Heart right ventricle (tissue), 16 donors: ENCODE measurements at regions of chr20 and their contacts with region 1.

Region 1: DNA sequence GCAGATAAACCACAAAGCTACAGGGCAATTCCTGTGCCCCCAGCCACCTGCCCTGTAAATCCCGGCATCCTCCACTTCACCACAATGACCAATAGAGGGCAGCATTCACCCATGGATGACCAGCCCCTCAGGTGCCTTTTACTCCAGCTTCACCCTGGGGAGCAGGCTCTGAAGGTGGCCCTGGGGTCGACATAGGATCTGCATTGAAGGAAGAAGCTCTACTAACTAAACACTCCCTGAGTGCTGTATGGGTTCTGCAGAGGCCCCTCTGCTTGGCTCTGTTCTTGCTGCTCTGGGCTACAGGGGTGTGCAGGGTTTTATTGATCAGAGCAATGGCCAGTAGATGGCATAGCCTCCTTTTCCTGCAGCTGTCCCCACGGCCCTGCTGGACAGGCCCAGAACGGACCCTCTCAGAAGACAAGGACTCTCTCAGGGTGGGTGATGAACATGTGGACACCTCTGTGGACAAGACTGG is 20.3 kb downstream of the CST4 start:
- DNase-seq: peak in 1 of 2 donors; percentile 54
- ATAC-seq: peak; percentile 67 to 86 (median 76)
- H3K4me3 ChIP-seq: no peak overlapping the region
- H3K27ac ChIP-seq: no peak overlapping the region
- H3K4me1 ChIP-seq: peaks cover 0 to 15% (median 0%) of the 10 kb centered on the region in 9 donors
- H3K27me3 ChIP-seq: peaks cover 0 to 5% (median 0%) of the 10 kb centered on the region in 7 donors
- CTCF ChIP-seq: peak; percentile 81 to 89 (median 87)

Region 2: DNA sequence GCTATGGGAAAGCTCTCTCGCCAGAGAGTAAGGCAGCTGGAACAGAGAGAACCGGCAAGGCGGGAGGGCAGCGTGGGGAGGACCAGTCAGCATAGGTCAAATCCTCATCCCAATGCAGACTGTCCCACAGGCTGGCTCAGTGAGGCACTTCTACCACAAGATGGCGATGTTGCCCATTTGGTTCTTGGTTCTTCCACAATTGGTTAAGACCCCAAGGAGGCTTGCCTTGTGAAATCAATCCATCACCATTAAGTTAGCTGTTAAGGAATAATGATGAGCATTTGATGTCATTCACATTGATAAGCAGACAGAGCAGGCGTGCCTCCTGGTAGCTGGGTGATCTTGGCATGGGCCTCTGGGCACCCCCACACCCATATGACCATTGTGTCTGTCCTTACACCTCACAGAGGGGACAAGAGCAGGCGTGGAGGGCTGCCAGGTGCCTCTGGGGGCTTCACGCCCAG is 226.6 kb before region 1 on chr20:
- intact Hi-C with region 1: loop called in 1 of 10 experiments (anchors 5 kb)
- DNase-seq: peak; percentile 31 to 72
- ATAC-seq: peak; percentile 59 to 82 (median 75)
- H3K4me3 ChIP-seq: no peak overlapping the region
- H3K27ac ChIP-seq: no peak overlapping the region
- H3K4me1 ChIP-seq: peaks cover 0 to 3% (median 0%) of the 10 kb centered on the region in 9 donors
- H3K27me3 ChIP-seq: no peaks in the 10 kb centered on the region
- CTCF ChIP-seq: peak; percentile 70 to 92 (median 86)

Region 3: DNA sequence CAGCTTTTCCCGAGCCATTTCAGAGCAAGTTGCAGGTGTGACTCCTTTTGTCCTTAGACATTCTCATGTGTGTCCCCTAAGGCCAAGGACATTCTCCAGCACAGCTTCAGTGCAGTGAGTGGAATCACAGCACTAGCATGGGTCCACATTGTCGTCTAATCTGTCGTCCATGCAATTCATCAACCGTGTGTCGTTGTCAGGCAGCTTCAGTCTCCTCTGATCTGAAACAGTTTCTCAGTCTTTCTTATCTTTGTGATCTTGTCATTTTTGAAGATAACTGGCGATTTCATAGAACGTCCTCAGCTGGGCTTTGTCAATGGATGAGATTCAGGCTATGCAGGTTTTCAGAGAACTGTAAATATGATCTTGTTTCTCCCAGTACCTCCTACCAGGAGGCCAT is 126.3 kb after region 1 on chr20:
- intact Hi-C with region 1: loop called in 1 of 10 experiments (anchors 10 kb)
- DNase-seq: no peak
- ATAC-seq: no peak
- H3K4me3 ChIP-seq: no peak overlapping the region
- H3K27ac ChIP-seq: no peak overlapping the region
- H3K4me1 ChIP-seq: no peaks in the 10 kb centered on the region
- H3K27me3 ChIP-seq: peaks cover 0 to 10% (median 0%) of the 10 kb centered on the region in 7 donors
- CTCF ChIP-seq: no peak

Region 4: DNA sequence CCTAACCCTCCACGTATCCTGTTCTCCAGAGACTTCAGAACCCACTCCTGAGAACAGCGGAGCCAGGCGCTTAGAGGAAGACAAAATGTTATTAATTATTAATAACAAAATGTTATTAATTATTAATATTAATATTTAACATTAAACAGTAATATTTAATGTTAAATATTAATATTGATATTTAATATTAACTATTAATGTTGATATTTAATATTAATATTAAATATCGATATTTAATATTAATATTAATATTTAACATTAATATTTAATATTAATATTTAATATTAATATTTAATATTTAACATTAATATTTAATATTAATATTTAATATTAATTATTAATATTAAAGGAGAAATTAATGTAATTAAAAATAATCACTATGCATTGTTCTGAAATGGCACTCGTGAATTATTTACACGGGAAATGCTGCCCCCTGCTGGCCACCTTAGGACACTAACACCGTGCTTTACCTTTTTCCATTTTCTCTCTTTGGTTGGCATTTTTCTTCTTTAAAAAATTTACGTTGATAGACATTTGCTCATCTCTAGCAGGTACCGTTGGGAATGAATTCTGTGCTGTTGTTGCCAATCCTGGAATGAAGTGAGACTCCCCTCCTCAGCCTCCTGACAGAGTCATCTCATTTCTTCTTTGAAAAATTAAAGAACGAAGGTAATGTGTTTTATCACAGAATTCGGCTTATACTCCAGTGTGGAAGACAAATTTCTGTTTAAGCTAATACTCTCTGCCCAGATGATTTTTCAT is 327.6 kb after region 1 on chr20:
- intact Hi-C with region 1: loop called in 3 of 10 experiments (anchors 5 kb)
- DNase-seq: peak; percentile 34 to 59
- ATAC-seq: no peak
- H3K4me3 ChIP-seq: no peak overlapping the region
- H3K27ac ChIP-seq: no peak overlapping the region
- H3K4me1 ChIP-seq: no peaks in the 10 kb centered on the region
- H3K27me3 ChIP-seq: peaks cover 0 to 42% (median 15%) of the 10 kb centered on the region in 7 donors
- CTCF ChIP-seq: peak; percentile 68 to 89 (median 80)